Activated CD4-positive, alpha-beta T cell treated with anti-CD3 and anti-CD28 coated beads for 36 hours (primary cell): ENCODE measurements at regions of chr19 and their contacts with region 1.

Region 1: GRCh38 chr19:3626473-3627350 is at the start of gene CACTIN:
- DNase-seq: peak; percentile 99
- ATAC-seq: peak; percentile 98
- H3K4me3 Mint-ChIP-seq: peak within 1 kb of the TSS; percentile 91
- H3K27ac Mint-ChIP-seq: peak within 1 kb of the TSS; percentile 82
- H3K4me1 Mint-ChIP-seq: peaks cover 22% of the 10 kb centered on the region
- H3K27me3 Mint-ChIP-seq: no peaks in the 10 kb centered on the region
- total RNA-seq, gene CACTIN: 28.0 to 33.6 TPM

Region 2: DNA sequence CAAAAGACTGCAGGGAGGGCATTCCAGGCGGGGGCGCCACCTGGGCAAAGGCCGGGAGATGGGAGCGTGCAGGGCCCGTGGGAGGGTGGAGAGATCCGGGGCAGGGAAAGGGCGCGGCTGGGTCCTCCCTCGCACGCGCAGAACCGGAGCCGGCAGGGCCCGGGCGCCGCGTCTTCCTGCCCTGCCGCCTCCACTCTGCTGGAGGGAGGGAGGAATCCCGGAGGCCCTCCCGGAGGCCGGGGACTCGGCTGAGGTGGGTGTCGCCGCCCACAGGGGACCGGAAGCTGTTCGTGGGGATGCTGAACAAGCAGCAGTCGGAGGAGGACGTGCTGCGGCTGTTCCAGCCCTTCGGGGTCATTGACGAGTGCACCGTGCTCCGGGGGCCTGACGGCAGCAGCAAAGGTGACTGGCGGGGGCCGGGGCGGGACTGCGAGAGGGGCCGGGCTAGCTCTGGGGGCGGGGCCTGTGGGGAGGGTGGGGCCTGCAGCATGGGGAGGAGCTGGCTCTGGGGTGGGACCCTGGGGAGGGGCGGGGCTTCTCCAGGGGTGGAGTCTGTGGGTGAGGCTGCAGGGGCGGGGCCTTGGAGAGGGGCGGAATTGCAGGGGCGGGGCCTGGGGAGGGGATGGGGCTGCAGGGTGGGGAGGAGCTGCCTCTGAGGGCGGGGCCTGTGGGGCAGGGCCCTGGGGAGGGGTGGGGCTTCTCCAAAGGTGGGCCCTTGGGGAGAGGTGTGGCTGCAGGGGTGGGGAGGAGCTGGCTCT is 350.9 kb before region 1 on chr19:
- CTCF ChIA-PET with region 1: no interaction called
- POLR2A ChIA-PET with region 1: no interaction called
- intact Hi-C with region 1: loop called in 1 of 2 experiments (anchors 1 kb)
- DNase-seq: peak; percentile 99
- ATAC-seq: peak; percentile 83
- H3K4me3 Mint-ChIP-seq: peak overlapping the region; percentile 73
- H3K27ac Mint-ChIP-seq: peak overlapping the region; percentile 80
- H3K4me1 Mint-ChIP-seq: peaks cover 8% of the 10 kb centered on the region
- H3K27me3 Mint-ChIP-seq: peaks cover 9% of the 10 kb centered on the region

Region 3: GRCh38 chr19:3505598-3506383 is 120.9 kb before region 1 on chr19 and contains the start of gene FZR1:
- CTCF ChIA-PET with region 1: no interaction called
- POLR2A ChIA-PET with region 1: no interaction called
- intact Hi-C with region 1: loop called in 1 of 2 experiments (anchors 1 kb)
- DNase-seq: peak; percentile 100
- ATAC-seq: peak; percentile 92
- H3K4me3 Mint-ChIP-seq: peak within 1 kb of the TSS; percentile 84
- H3K27ac Mint-ChIP-seq: peak within 1 kb of the TSS; percentile 86
- H3K4me1 Mint-ChIP-seq: peaks cover 45% of the 10 kb centered on the region
- H3K27me3 Mint-ChIP-seq: no peaks in the 10 kb centered on the region
- total RNA-seq, gene FZR1: 40.8 to 50.7 TPM

Region 4: GRCh38 chr19:3572132-3572854 is 54.4 kb before region 1 on chr19:
- CTCF ChIA-PET with region 1: no interaction called
- POLR2A ChIA-PET with region 1: no interaction called
- intact Hi-C with region 1: loop called (anchors 1 kb)
- DNase-seq: peak; percentile 100
- ATAC-seq: peak; percentile 96
- H3K4me3 Mint-ChIP-seq: peak overlapping the region; percentile 73
- H3K27ac Mint-ChIP-seq: no peak overlapping the region
- H3K4me1 Mint-ChIP-seq: peaks cover 11% of the 10 kb centered on the region
- H3K27me3 Mint-ChIP-seq: no peaks in the 10 kb centered on the region

Region 5: GRCh38 chr19:3710265-3710812 is 83.6 kb after region 1 on chr19:
- CTCF ChIA-PET with region 1: no interaction called
- POLR2A ChIA-PET with region 1: no interaction called
- intact Hi-C with region 1: no loop called
- DNase-seq: no peak
- ATAC-seq: no peak
- H3K4me3 Mint-ChIP-seq: no peak overlapping the region
- H3K27ac Mint-ChIP-seq: no peak overlapping the region
- H3K4me1 Mint-ChIP-seq: no peaks in the 10 kb centered on the region
- H3K27me3 Mint-ChIP-seq: peaks cover 2% of the 10 kb centered on the region

Region 6: DNA sequence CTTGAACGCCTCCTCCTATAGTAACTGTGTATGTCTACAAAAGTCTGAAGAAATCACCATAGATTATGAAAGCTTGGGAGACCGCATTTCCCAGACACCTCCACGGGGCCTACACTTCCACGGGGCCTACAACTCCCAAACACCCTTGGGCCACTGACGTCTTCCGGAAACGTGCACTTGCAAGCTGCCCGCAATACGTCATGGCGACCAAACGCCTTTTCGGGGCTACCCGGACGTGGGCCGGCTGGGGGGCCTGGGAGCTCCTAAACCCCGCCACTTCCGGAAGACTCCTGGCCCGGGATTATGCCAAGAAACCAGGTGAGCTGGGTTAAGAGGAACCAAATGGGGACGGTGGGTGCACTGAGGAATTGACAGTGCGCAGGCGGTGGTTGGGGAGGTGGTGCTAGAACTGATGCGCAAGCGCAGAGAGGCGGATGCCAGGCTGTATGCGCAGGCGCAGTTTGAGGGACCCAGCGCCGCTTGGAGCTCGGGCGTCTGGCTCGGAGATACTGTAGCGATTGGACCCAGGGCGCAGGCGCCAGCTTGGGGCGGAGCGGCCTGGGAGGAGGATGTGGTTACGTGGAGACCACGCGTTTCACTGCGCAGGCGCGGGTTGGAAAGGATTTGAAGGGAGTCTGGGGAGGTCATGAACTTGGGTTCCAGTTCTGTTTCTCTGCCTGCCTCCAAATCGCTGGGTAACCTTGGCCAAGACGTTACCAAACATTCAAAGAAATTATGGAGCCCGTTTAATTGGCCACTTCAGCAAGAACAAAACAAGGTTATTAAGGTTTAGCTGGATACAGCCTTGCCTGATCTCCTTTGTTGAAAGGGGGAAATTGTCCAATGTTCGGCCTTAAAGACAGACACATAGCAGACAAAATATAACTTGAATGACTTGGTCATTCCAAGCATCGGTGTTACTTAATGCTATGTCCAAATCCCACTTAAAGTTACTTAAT is 136.1 kb after region 1 on chr19 and contains the start of gene MRPL54:
- CTCF ChIA-PET with region 1: no interaction called
- POLR2A ChIA-PET with region 1: no interaction called
- intact Hi-C with region 1: loop called in 1 of 2 experiments (anchors 1 kb)
- DNase-seq: peak; percentile 100
- ATAC-seq: peak; percentile 88
- H3K4me3 Mint-ChIP-seq: peak within 1 kb of the TSS; percentile 100
- H3K27ac Mint-ChIP-seq: peak within 1 kb of the TSS; percentile 99
- H3K4me1 Mint-ChIP-seq: peaks cover 39% of the 10 kb centered on the region
- H3K27me3 Mint-ChIP-seq: no peaks in the 10 kb centered on the region
- total RNA-seq, gene MRPL54: 54.8 to 63.9 TPM

Region 7: GRCh38 chr19:4123615-4124568 is 497.2 kb after region 1 on chr19 and contains the start of gene MAP2K2:
- CTCF ChIA-PET with region 1: no interaction called
- POLR2A ChIA-PET with region 1: no interaction called
- intact Hi-C with region 1: loop called in 1 of 2 experiments (anchors 1 kb)
- DNase-seq: peak; percentile 98
- ATAC-seq: peak; percentile 96
- H3K4me3 Mint-ChIP-seq: peak within 1 kb of the TSS; percentile 97
- H3K27ac Mint-ChIP-seq: peak within 1 kb of the TSS; percentile 92
- H3K4me1 Mint-ChIP-seq: peaks cover 18% of the 10 kb centered on the region
- H3K27me3 Mint-ChIP-seq: no peaks in the 10 kb centered on the region
- total RNA-seq, gene MAP2K2: 108 to 133 TPM

Region 8: DNA sequence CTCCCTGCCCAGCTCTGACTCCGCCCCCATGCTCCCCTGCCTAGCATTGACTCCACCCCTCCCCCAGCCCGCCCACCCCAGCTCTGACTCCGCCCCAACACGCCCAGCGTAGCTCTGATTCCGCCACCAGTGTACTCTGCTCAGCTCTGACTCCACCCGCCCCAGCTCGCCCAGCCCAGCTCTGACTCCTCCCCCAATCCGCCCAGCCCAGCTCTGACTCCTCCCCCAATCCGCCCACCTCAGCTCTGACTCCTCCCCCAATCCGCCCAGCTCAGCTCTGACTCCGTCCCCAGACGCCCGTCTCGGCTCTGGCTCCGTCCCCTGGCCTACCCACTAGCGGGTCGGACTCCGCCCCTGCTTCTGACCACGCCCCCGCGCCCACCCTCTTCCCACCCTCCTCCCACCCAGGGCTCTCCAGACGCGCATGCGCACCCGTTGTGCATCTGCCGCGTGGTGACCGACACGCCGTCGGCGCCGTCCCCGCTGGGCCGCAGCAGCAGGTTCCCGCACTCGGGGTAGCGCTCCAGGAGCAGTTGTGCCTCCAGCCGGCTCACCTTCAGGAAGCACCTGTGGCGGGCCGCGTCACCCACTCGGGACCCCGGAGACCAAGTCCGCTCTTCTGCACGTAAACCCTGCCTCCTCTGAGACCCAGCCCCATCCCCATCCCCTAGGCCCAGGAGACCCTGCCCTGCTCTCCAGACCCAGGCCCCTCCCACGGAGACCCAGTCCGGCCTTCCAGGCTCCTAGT is 701.7 kb after region 1 on chr19:
- CTCF ChIA-PET with region 1: no interaction called
- POLR2A ChIA-PET with region 1: no interaction called
- intact Hi-C with region 1: loop called in 1 of 2 experiments (anchors 5 kb)
- DNase-seq: peak; percentile 100
- ATAC-seq: peak; percentile 85
- H3K4me3 Mint-ChIP-seq: peak overlapping the region; percentile 93
- H3K27ac Mint-ChIP-seq: peak overlapping the region; percentile 94
- H3K4me1 Mint-ChIP-seq: peaks cover 27% of the 10 kb centered on the region
- H3K27me3 Mint-ChIP-seq: no peaks in the 10 kb centered on the region